GM18951 (cell line): ENCODE measurements at regions of chr16 and their contacts with region 1.

Region 1: DNA sequence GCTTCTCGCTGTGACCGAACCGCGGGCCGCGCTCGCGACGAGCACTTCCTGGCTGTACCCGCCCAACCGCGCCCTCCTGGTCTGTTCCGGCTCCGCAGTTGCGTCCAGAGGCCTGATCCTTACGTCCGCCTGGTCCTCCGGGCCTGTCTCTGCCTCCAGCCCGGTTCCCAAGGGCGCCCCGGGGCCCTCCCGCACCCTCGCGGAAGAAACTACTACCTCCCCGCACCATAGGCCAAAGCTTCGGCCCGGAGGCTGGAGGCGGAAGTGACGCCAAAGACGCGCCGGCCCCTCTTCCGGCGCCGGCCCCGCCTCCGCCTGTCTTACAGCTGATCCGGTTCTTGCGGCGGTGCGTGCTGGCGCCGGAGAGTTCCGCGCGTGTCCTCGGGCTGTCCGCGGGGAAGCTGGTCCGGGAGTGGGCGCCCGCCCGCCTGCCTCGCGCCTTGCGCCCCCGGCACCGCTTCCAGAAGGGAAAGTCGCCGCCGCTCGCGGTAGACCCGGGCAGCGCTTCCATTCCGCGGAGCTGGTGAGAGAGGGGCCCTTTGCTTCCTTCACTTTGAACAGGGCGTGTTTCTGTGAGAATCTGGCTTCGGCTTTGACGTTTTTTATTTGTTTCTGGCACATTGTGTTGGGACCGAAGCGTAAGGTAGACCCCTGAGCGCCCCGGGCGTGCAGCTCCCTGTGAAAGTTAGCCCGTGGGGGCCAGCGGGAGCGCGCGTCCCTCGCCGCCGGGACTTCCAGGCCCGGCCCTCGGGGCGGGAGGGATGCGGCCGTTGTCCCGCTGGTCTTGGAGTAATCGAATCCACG is at the start of gene ZNF778:
- POLR2A ChIP-seq: peak; percentile 86

Region 2: GRCh38 chr16:88811769-88812512 is 405.6 kb before region 1 on chr16 and contains the start of gene APRT:
- in situ Hi-C with region 1: loop called (anchors 25 kb)
- POLR2A ChIP-seq: peak; percentile 93

Region 3: GRCh38 chr16:88920618-88921590 is 296.7 kb before region 1 on chr16:
- in situ Hi-C with region 1: no loop called
- POLR2A ChIP-seq: peak; percentile 29